ENCODE measurements at regions of chr19 and their contacts with region 1.

Region 1: GRCh38 chr19:1383311-1384084 is at the start of gene NDUFS7:
- DNase-seq: peak; percentile 93
- H3K4me3 ChIP-seq: peak within 1 kb of the TSS; percentile 77
- H3K27ac ChIP-seq: peak within 1 kb of the TSS; percentile 89
- H3K4me1 ChIP-seq: no peaks in the 10 kb centered on the region
- H3K27me3 ChIP-seq: no peaks in the 10 kb centered on the region
- CTCF ChIP-seq: peak; percentile 29; the same call in 1 of the 2 replicates
- total RNA-seq, gene NDUFS7: 101 and 111 TPM in 2 replicates

Region 2: GRCh38 chr19:1324806-1325567 is 58.5 kb before region 1 on chr19:
- CTCF ChIA-PET with region 1: interaction called, 10 read pairs
- POLR2A ChIA-PET with region 1: no interaction called
- intact Hi-C with region 1: no loop called
- DNase-seq: peak; percentile 76
- H3K4me3 ChIP-seq: peak overlapping the region; percentile 39
- H3K27ac ChIP-seq: no peak overlapping the region
- H3K4me1 ChIP-seq: peaks cover 7% of the 10 kb centered on the region
- H3K27me3 ChIP-seq: no peaks in the 10 kb centered on the region
- CTCF ChIP-seq: no peak

Region 3: GRCh38 chr19:1355568-1356507 is 27.7 kb before region 1 on chr19:
- CTCF ChIA-PET with region 1: no interaction called
- POLR2A ChIA-PET with region 1: no interaction called
- intact Hi-C with region 1: loop called (anchors 2 kb)
- DNase-seq: peak; percentile 51
- H3K4me3 ChIP-seq: peak overlapping the region; percentile 80
- H3K27ac ChIP-seq: peak overlapping the region; percentile 77
- H3K4me1 ChIP-seq: peaks cover 40% of the 10 kb centered on the region
- H3K27me3 ChIP-seq: no peaks in the 10 kb centered on the region
- CTCF ChIP-seq: no peak

Region 4: GRCh38 chr19:1507763-1508509 is 124.4 kb after region 1 on chr19:
- CTCF ChIA-PET with region 1: no interaction called
- POLR2A ChIA-PET with region 1: no interaction called
- intact Hi-C with region 1: no loop called
- DNase-seq: peak; percentile 98
- H3K4me3 ChIP-seq: peak overlapping the region; percentile 40
- H3K27ac ChIP-seq: peak overlapping the region; percentile 93
- H3K4me1 ChIP-seq: peaks cover 23% of the 10 kb centered on the region
- H3K27me3 ChIP-seq: no peaks in the 10 kb centered on the region
- CTCF ChIP-seq: no peak

Measured in A673 (cell line).